Activated T-helper 2 cell treated with anti-CD3 and anti-CD28 coated beads, Interferon-gamma antibody, Interleukin-2, Interleukin-4, amounts not matched to agents 10 μg/mL and 5 μg/mL and 100 μg/mL, durations not matched to agents 14 hours and 24 hours and 36 hours (primary cell): ENCODE measurements at regions of chr2 and their contacts with region 1.

Region 1: DNA sequence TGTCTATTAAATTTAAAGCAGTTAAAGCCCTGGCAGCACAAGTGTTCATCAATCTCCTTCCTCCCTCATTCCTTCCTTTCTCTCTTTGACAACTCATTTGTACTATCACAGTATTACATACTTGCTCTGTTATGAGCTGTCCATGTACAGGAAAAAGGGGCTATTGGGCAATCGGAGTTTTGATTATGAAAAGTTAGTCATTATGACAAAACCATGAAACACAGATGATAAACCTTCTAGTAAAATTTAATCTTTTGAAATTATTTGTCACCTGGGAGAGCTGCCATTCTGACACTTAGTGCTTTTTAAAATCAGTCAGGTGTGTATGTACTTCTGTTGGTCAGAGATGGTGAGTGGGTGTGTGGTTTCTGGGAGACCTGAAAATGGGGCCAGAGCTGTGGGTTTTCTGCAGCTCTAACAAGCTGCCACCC is 39.4 kb downstream of the MAP4K4 start:
- DNase-seq: no peak
- H3K4me3 Mint-ChIP-seq: no peak overlapping the region
- H3K27ac Mint-ChIP-seq: no peak overlapping the region
- H3K4me1 Mint-ChIP-seq: peaks cover 55% of the 10 kb centered on the region
- H3K27me3 Mint-ChIP-seq: no peaks in the 10 kb centered on the region

Region 2: GRCh38 chr2:101419096-101419663 is 317.7 kb before region 1 on chr2:
- intact Hi-C with region 1: loop called (anchors 5 kb)
- DNase-seq: peak; percentile 33
- H3K4me3 Mint-ChIP-seq: no peak overlapping the region
- H3K27ac Mint-ChIP-seq: no peak overlapping the region
- H3K4me1 Mint-ChIP-seq: peaks cover 1% of the 10 kb centered on the region
- H3K27me3 Mint-ChIP-seq: no peaks in the 10 kb centered on the region

Region 3: DNA sequence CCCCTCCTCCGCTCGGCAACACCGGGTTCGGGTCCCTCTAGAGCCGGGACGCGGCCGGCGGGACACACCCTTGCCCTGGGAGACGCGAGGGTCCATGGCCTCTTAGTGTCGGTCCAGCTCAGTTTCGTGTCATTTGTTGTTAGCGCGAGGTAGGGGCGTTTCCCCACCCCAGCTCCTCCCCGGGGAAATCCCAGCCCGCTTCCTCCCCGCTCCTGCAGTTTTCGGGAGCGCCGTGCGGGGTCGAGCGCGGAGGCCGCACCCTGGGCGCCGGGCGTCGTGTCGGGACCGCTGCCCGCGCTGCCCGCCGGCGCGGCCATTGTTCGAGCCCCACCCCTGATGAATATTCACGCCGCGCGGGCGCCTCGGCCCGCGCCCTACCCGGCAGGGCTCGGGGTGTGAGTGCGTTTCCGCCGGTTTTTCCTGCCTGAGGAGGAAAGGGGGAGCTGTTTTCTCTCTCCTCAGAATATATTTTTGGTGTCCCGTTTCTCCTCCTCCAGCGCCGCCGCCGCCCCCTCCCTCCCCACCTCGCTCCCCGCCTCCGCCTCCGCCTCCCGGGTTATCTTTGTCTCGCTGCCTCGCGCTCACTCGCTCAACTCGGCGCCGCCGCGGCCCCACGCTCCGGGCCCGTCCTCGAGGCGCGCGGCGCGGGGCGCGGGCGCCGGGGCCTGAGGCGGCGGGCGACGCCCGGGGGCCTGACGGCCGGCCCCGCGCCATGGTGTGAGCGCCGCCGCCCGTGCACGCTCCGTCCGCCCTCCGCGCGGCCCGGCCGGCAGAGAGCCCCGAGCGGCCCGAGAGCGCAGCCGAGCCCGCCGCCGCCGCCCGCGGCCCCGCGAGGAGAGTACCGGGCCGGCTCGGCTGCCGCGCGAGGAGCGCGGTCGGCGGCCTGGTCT is 39.5 kb before region 1 on chr2 and contains the start of gene MAP4K4:
- intact Hi-C with region 1: loop called (anchors 5 kb)
- DNase-seq: peak; percentile 69
- H3K4me3 Mint-ChIP-seq: peak within 1 kb of the TSS; percentile 84
- H3K27ac Mint-ChIP-seq: peak within 1 kb of the TSS; percentile 83
- H3K4me1 Mint-ChIP-seq: peaks cover 21% of the 10 kb centered on the region
- H3K27me3 Mint-ChIP-seq: no peaks in the 10 kb centered on the region
- total RNA-seq, gene MAP4K4: 36.8 and 40.6 TPM in 2 replicates

Region 4: DNA sequence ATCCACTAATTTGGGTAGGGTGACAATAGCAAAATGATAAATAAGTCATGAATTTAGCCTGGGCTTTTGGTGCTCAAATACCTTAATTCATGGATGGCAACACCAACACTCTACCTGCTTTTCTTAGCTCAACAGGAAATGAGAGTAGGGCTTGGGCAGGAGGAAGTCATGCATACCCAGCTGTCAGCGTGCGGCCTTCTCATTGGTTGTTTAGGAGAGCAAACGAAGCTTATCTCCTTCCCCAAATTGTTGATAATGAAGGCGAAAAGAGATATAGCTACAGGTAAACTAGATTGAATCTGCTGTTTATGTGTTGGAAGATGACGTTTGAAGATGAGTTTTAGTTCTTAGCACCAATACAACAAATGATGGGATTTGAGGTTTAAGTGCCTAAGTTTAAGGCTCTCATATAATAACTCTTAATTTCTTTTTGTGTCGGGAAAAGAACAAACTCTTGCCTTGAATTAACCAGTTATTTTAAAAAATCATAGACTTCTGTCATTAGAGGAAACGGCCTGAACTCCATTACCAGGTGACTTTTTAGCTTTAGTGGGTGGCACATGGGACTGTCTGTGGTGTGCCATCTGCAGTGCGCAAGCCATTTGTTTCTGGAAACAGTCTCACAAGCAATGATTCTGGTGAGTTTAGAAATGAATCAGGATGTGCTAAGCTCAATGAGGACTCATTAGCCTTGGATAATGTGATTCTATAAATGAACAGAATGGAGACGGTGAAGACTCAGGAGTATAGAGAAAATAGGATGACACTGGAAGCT is 19.6 kb before region 1 on chr2:
- intact Hi-C with region 1: loop called (anchors 1 kb)
- DNase-seq: no peak
- H3K4me3 Mint-ChIP-seq: peak overlapping the region; percentile 38
- H3K27ac Mint-ChIP-seq: peak overlapping the region; percentile 83
- H3K4me1 Mint-ChIP-seq: peaks cover 60% of the 10 kb centered on the region
- H3K27me3 Mint-ChIP-seq: no peaks in the 10 kb centered on the region

Region 5: GRCh38 chr2:101759162-101759561 is 22.3 kb after region 1 on chr2:
- intact Hi-C with region 1: loop called (anchors 2 kb)
- DNase-seq: no peak
- H3K4me3 Mint-ChIP-seq: no peak overlapping the region
- H3K27ac Mint-ChIP-seq: no peak overlapping the region
- H3K4me1 Mint-ChIP-seq: peaks cover 39% of the 10 kb centered on the region
- H3K27me3 Mint-ChIP-seq: no peaks in the 10 kb centered on the region

Region 6: GRCh38 chr2:101770726-101771125 is 33.9 kb after region 1 on chr2:
- intact Hi-C with region 1: no loop called
- DNase-seq: no peak
- H3K4me3 Mint-ChIP-seq: no peak overlapping the region
- H3K27ac Mint-ChIP-seq: no peak overlapping the region
- H3K4me1 Mint-ChIP-seq: peaks cover 55% of the 10 kb centered on the region
- H3K27me3 Mint-ChIP-seq: no peaks in the 10 kb centered on the region